ENCODE measurements at regions of chr7 and their contacts with region 1.

Region 1: GRCh38 chr7:1619152-1620006 is 49.5 kb upstream of the PSMG3 start:
- DNase-seq: no peak
- CTCF ChIP-seq: no peak

Region 2: DNA sequence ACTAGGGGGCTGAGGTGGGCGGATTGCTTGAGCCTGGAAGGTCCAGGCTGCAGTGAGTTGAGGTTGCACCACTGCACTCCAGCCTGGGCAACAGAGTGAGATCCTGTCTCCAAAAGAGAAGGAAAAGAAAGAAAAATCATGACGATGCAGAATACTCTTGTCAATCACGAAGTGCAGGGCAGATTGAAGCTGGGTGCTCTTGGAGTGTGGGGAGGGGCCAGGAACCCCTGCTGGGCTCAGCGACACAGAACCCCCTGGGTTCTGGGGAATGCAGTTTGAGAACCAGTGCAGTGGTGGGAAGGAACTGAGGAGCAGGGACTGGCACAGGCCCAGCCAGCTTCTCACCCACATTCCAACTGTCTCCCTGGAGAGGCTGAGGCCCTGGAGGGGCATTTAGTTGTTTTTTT is 104.4 kb before region 1 on chr7:
- CTCF ChIA-PET with region 1: no interaction called
- POLR2A ChIA-PET with region 1: interaction called, 13 read pairs
- DNase-seq: no peak
- CTCF ChIP-seq: no peak

Measured in GM10248 (cell line).